GM10248 (cell line): ENCODE measurements at regions of chr3 and their contacts with region 1.

Region 1: DNA sequence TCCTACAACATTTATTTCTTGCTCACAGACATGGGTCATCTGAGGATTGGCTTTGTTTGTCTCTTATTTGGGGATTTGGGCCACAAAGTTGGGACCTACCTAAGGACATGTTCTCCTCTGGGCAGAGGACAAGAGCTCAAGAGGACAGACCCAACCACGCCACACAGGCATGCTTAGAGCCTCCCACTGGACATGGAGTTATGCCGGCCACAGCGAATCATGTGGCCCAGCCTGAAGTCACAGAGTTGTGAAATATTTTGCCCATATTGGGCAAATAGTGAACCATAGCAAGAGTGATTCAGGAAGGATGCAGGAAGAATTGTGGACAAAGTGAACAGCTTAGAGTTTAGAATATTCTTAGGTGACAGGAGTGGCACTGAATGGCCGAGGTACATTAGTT is 9.9 kb downstream of the TRAK1 start:
- DNase-seq: no peak
- CTCF ChIP-seq: no peak

Region 2: DNA sequence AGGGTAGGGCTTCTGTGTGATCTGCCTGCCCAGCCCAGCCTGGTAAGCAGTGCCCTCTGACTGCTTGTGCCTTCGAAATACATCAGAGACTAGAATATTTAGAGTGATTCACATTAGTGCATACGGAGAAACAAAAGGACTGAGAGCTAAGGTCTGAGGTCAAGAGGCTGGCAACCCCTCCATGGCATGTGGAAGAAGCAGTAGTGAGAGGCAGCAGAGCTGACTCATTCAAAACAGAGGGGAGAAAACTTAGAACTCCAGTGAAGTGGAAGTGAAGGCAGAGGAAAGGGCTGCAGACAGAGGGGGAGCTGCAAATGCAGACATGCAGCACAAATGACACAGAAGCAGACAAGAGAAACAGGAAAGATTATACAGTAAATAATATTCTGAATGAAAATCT is 200.8 kb before region 1 on chr3:
- CTCF ChIA-PET with region 1: interaction called, 29 read pairs
- POLR2A ChIA-PET with region 1: no interaction called
- DNase-seq: no peak
- CTCF ChIP-seq: no peak

Region 3: DNA sequence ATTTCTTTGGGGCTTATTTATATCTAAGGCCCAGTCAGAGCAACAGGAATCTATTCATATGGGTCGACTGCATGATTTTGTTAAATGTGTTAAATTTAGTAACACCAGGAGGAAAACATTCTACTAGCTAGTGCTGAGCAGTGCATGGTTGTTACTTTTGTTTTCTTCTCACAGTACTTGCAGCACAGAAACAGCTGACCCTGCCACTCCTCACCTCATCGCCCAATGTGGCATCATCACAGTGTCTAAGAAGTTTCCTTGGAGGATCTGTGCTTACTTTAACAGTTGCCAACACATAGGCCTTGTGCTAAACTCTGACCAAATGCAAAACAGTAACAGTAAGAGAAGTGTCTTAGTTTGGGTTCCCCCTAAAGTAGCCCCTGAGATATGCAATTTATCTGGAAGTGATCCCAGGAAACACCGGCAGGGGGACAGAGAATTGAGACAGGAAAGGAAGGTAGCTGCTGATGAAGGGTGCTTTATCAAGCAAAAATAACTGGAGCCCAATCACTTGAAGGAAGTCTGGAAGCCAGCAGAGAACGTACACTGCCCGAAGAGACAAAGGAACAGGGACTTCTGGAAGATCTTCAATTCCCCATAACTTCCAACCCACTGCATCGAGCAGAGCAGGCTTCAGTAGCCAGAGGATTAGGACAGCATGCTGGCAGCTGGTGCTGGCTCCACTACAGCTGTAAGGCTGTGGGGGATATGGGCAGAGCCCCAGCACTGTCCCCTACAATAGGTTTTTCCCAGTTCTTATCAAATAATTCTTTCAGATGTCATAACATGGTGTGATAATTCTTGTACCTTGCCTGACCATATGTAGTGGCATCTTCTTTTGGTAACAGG is 103.1 kb before region 1 on chr3:
- CTCF ChIA-PET with region 1: interaction called, 22 read pairs
- POLR2A ChIA-PET with region 1: no interaction called
- DNase-seq: no peak
- CTCF ChIP-seq: no peak

Region 4: GRCh38 chr3:42025370-42026138 is 75.5 kb before region 1 on chr3:
- CTCF ChIA-PET with region 1: interaction called, 16 read pairs
- POLR2A ChIA-PET with region 1: no interaction called
- DNase-seq: peak; percentile 55
- CTCF ChIP-seq: no peak

Region 5: DNA sequence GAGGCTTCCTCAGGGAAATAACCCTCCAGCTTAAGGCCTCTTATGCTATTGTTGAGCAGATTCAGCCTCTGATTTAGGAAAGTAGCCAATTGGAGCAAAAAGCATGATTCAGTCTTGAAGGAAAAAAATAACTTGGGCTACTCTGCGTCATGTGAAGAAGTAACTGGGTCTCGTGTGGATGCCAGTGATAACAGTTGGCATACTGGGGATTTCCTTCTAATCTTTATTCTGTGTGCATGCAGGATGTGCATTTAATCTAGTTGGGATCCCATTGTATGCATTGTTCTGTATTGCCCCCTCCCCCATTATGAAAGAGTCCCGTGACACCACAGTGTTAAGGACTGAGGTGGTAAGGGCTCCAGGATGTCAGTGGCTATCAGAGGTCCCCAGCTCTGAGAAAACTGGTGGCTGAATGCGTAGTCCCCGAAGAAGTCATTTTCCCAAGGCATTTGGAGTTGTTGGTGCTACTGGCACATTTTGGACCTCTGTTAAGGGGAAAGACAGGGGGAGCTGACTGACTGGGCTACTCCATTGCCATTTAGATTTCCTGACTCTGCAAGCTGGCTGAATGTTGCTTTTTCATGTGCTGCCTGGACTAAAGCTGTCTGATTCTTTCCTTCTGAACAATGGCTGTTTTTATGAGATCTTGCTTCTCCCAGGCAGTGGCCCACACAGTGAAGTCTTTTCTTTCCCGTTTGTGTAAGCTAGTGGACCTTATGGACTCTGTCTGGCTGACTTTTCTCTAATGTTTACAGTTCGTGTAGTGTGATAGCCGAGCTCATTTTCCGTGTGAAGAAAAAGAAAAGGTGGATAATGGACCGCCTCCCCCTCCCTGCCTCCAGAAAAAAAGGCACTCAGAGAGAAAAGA is 48.3 kb before region 1 on chr3:
- CTCF ChIA-PET with region 1: interaction called, 15 read pairs
- POLR2A ChIA-PET with region 1: no interaction called
- DNase-seq: no peak
- CTCF ChIP-seq: no peak

Region 6: DNA sequence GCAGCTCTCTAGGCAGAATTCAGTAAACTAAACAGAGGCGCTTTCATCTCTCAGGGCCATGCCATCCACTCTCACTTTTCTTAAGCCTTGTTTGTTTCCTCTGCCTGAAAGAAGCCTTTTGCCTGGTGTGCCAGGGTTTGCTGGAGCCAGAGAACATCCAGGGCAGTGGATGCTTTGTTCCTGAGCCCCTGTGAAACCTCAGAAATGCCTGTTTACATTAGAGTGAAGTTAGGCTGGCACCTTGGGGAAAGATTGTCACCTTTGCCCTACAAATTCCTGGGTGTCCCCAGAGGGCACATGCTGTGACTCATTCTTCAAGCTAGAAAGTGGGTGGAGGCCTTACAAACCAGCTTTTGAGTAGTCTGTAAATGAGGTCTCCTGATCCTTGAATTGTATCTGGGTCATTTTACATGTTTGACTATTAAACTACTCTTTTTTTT is 20.6 kb before region 1 on chr3:
- CTCF ChIA-PET with region 1: interaction called, 42 read pairs
- POLR2A ChIA-PET with region 1: no interaction called
- DNase-seq: no peak
- CTCF ChIP-seq: no peak

Region 7: GRCh38 chr3:42190701-42191462 is 89.8 kb after region 1 on chr3:
- CTCF ChIA-PET with region 1: interaction called, 15 read pairs
- POLR2A ChIA-PET with region 1: no interaction called
- DNase-seq: peak; percentile 62
- CTCF ChIP-seq: peak; percentile 77